Activated naive CD4-positive, alpha-beta T cell treated with anti-CD3 and anti-CD28 coated beads for 36 hours (primary cell): ENCODE measurements at regions of chr7 and their contacts with region 1.

Region 1: GRCh38 chr7:39623018-39623731 is at the start of gene RALA:
- DNase-seq: peak; percentile 92
- H3K4me3 Mint-ChIP-seq: peak within 1 kb of the TSS; percentile 97
- H3K27ac Mint-ChIP-seq: peak within 1 kb of the TSS; percentile 95
- H3K4me1 Mint-ChIP-seq: peaks cover 44% of the 10 kb centered on the region
- H3K27me3 Mint-ChIP-seq: no peaks in the 10 kb centered on the region
- total RNA-seq, gene RALA: 30.3 to 35.6 TPM

Region 2: DNA sequence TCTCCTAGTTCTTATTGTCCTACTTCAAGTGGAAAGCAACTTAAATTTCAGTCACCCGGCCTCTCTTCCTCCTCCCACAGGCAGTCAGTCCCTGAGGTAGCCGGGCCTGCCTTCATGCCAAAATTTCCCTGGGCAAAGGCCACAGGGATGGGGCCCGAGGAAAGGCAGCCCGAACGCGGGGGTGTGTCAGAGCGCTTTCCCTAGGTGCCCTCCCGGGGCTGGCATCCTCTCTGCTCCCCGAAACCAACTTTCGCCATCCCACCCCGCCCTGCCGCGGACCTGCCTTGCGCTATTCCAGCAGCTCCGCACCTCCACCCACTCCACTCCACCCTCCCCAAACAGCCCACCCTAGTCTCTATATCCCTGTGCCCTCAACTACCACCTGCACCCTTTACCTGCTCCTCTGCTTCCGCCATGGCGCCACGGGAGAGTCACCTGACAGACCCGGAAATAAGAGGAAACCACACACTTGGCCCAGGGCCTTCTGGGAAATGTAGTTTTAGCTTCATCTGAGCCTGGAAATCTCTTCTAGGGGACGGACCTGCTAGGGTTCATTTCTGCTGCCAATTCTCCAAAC is 714.3 kb before region 1 on chr7 and contains the start of gene VPS41:
- CTCF ChIA-PET with region 1: no interaction called
- intact Hi-C with region 1: loop called (anchors 5 kb)
- DNase-seq: peak; percentile 87
- H3K4me3 Mint-ChIP-seq: peak within 1 kb of the TSS; percentile 91
- H3K27ac Mint-ChIP-seq: peak within 1 kb of the TSS; percentile 72
- H3K4me1 Mint-ChIP-seq: peaks cover 40% of the 10 kb centered on the region
- H3K27me3 Mint-ChIP-seq: no peaks in the 10 kb centered on the region
- total RNA-seq, gene VPS41: 51.1 to 57.8 TPM

Region 3: DNA sequence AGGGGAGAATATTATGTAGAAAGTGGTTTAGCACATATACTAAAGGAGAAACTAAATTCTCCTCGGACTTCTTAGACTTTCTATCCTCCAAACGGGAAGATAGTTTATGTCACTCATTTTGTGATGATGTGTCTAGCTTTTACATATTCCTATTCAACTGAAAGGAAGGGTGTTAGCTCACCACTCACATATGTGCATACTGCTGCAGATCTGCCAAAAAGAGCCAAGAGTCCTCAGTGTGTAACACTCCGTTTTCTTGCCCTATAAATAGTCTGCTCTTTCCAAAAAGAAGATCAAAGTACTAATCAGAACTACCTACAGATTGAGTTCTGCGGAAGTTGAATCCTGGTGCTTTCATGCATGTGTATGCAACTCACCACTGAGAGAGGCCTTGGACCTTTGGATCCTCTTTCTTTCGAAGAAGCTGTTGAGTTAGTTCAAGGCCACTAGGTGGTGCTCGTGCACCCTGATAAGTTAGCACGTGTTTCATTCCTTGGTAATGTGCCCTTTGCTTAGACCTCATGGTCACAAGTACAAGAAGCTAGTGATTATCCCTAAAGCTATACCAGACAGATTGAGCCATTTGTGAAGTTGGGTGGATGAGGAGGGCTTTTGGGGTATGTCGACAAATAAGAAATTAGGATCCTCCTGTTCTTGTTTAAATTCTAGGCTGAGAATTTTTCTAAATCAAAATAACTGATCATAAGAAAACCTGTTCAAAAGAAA is 42.9 kb before region 1 on chr7:
- CTCF ChIA-PET with region 1: interaction called, 55 read pairs
- intact Hi-C with region 1: no loop called
- DNase-seq: peak; percentile 89
- H3K4me3 Mint-ChIP-seq: no peak overlapping the region
- H3K27ac Mint-ChIP-seq: no peak overlapping the region
- H3K4me1 Mint-ChIP-seq: peaks cover 11% of the 10 kb centered on the region
- H3K27me3 Mint-ChIP-seq: no peaks in the 10 kb centered on the region

Region 4: DNA sequence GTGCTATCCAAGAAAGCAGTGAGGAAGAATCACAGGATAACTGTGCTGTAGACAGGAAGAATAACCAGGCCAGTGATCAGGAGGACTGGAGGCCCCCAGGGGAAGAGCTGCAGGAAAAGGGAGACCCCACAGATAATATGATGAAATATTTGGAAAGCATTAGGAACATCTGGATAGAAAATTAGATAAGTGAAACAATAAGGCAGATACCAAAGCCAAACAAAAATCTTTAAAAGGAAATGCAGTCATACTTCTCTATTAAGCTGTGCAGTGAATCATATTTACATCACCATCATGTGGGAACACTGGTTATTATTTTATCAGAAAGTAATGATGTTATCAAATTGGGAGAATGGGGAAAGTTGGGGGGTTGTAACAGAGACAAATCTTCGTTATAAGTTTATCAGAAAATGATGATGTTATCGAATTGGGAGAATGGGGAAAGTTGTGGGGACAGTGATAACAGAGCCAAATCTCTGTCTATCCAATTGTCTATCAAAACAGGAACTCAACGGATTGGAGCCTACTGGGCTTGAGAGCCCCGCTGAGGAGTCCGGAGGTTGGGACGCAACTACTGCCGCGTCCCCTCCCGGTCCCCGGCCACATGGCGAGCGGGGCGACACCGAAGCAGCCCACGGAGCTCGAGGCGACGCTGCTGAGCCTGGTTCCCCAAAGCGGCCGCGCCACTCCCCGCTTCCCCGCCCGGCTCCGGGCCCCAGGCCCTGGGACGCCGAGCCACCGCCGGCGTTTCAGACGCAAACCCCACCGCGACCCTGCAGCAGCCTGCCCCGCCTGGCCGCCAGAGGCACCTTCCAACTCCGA is 13.9 kb before region 1 on chr7:
- CTCF ChIA-PET with region 1: interaction called, 5 read pairs
- intact Hi-C with region 1: loop called (anchors 1 kb)
- DNase-seq: peak; percentile 20
- H3K4me3 Mint-ChIP-seq: peak overlapping the region; percentile 55
- H3K27ac Mint-ChIP-seq: peak overlapping the region; percentile 39
- H3K4me1 Mint-ChIP-seq: peaks cover 48% of the 10 kb centered on the region
- H3K27me3 Mint-ChIP-seq: peaks cover 3% of the 10 kb centered on the region

Region 5: GRCh38 chr7:39650676-39651075 is 27.5 kb after region 1 on chr7:
- CTCF ChIA-PET with region 1: no interaction called
- intact Hi-C with region 1: no loop called
- DNase-seq: no peak
- H3K4me3 Mint-ChIP-seq: no peak overlapping the region
- H3K27ac Mint-ChIP-seq: no peak overlapping the region
- H3K4me1 Mint-ChIP-seq: peaks cover 20% of the 10 kb centered on the region
- H3K27me3 Mint-ChIP-seq: no peaks in the 10 kb centered on the region

Region 6: GRCh38 chr7:39686261-39686924 is 63.2 kb after region 1 on chr7:
- CTCF ChIA-PET with region 1: no interaction called
- intact Hi-C with region 1: loop called (anchors 1 kb)
- DNase-seq: no peak
- H3K4me3 Mint-ChIP-seq: no peak overlapping the region
- H3K27ac Mint-ChIP-seq: peak overlapping the region; percentile 69
- H3K4me1 Mint-ChIP-seq: peaks cover 65% of the 10 kb centered on the region
- H3K27me3 Mint-ChIP-seq: no peaks in the 10 kb centered on the region

Region 7: GRCh38 chr7:39727231-39728012 is 104.2 kb after region 1 on chr7:
- CTCF ChIA-PET with region 1: no interaction called
- intact Hi-C with region 1: no loop called
- DNase-seq: no peak
- H3K4me3 Mint-ChIP-seq: no peak overlapping the region
- H3K27ac Mint-ChIP-seq: no peak overlapping the region
- H3K4me1 Mint-ChIP-seq: no peaks in the 10 kb centered on the region
- H3K27me3 Mint-ChIP-seq: no peaks in the 10 kb centered on the region

Region 8: GRCh38 chr7:39746103-39746819 is 123.1 kb after region 1 on chr7:
- CTCF ChIA-PET with region 1: interaction called, 11 read pairs
- intact Hi-C with region 1: loop called (anchors 1 kb)
- DNase-seq: peak; percentile 76
- H3K4me3 Mint-ChIP-seq: no peak overlapping the region
- H3K27ac Mint-ChIP-seq: no peak overlapping the region
- H3K4me1 Mint-ChIP-seq: peaks cover 18% of the 10 kb centered on the region
- H3K27me3 Mint-ChIP-seq: no peaks in the 10 kb centered on the region